Heart right ventricle (tissue), 16 donors: ENCODE measurements at regions of chr17 and their contacts with region 1.

Region 1: GRCh38 chr17:50626037-50626574 is 8.6 kb upstream of the ABCC3 start:
- DNase-seq: peak; percentile 76
- ATAC-seq: peak; percentile 73 to 88 (median 84)
- H3K4me3 ChIP-seq: no peak overlapping the region
- H3K27ac ChIP-seq: no peak overlapping the region
- H3K4me1 ChIP-seq: peaks cover 0 to 9% (median 7%) of the 10 kb centered on the region in 9 donors
- H3K27me3 ChIP-seq: peaks cover 0 to 53% (median 46%) of the 10 kb centered on the region in 7 donors
- CTCF ChIP-seq: peak; percentile 67 to 88 (median 83)

Region 2: GRCh38 chr17:50487213-50488096 is 138.7 kb before region 1 on chr17:
- intact Hi-C with region 1: loop called in 8 of 10 experiments (anchors 5 to 10 kb)
- DNase-seq: no peak
- ATAC-seq: no peak
- H3K4me3 ChIP-seq: no peak overlapping the region
- H3K27ac ChIP-seq: no peak overlapping the region
- H3K4me1 ChIP-seq: peaks cover 2 to 9% (median 7%) of the 10 kb centered on the region in 9 donors
- H3K27me3 ChIP-seq: no peaks in the 10 kb centered on the region
- CTCF ChIP-seq: no peak

Region 3: GRCh38 chr17:50672831-50673601 is 46.9 kb after region 1 on chr17:
- intact Hi-C with region 1: loop called in 1 of 10 experiments (anchors 5 kb)
- DNase-seq: peak in 1 of 2 donors; percentile 49
- ATAC-seq: peak; percentile 57 to 96 (median 86)
- H3K4me3 ChIP-seq: no peak overlapping the region
- H3K27ac ChIP-seq: peak overlapping the region in 2 of 10 donors; percentile 25 to 26
- H3K4me1 ChIP-seq: peaks cover 0 to 5% (median 0%) of the 10 kb centered on the region in 9 donors
- H3K27me3 ChIP-seq: no peaks in the 10 kb centered on the region
- CTCF ChIP-seq: no peak

Region 4: DNA sequence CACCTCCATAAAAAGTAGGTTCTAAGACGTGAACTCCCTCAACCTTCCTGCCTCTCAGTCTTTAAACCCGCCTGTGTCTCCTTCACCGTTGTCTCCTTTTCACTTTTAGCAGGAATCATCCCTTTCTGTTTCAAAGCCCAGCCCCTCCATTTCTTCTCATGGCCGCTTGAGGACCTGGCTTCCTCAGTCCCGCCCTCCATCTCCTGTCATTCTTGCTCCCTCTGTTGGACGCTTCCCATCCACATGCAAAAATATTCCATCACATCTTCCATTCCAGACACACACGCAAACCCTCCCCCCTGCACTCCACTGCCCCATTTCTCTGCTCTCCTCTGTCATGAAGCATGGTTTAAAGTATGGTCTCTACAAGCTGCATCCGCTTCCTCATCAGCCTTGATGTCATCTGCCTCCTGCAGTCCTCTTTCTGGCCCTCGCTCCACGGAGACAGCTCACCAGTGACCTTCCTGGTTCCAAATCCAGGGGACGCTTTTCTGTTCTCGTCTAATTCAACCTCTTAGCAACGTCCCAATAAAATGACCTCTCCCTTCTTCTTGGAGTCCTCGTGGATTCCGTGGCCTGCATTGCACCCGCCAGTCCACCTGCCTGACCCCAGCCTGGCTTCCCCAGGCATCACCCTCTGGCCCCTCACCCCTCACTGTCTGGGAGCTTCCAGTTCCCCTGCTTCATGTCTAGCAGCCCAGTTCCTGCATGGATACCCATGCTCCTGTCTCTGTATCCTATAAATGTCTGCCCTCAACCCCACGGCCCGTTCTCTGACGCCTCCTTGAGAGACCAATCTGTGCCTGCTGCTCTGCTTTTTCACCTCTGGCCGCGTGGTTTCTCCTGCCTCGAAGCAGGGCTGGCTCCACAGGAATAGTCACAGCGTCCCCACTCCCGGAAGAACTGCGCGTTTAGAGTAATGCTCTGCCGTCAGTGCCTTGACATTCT is 55.4 kb after region 1 on chr17:
- intact Hi-C with region 1: loop called in 8 of 10 experiments (anchors 1 to 5 kb)
- DNase-seq: peak in 1 of 2 donors; percentile 59
- ATAC-seq: peak in 6 of 8 donors; percentile 53 to 84 (median 76)
- H3K4me3 ChIP-seq: no peak overlapping the region
- H3K27ac ChIP-seq: peak overlapping the region in 1 of 10 donors; percentile 53
- H3K4me1 ChIP-seq: peaks cover 0 to 19% (median 8%) of the 10 kb centered on the region in 9 donors
- H3K27me3 ChIP-seq: no peaks in the 10 kb centered on the region
- CTCF ChIP-seq: peak; percentile 18 to 69 (median 58)

Region 5: GRCh38 chr17:50686494-50687199 is 60.5 kb after region 1 on chr17:
- intact Hi-C with region 1: loop called in 8 of 10 experiments (anchors 1 to 5 kb)
- DNase-seq: peak in 1 of 2 donors; percentile 34
- ATAC-seq: peak; percentile 21 to 91 (median 77)
- H3K4me3 ChIP-seq: no peak overlapping the region
- H3K27ac ChIP-seq: peak overlapping the region in 7 of 10 donors; percentile 39 to 65 (median 56)
- H3K4me1 ChIP-seq: peaks cover 2 to 36% (median 13%) of the 10 kb centered on the region in 9 donors
- H3K27me3 ChIP-seq: no peaks in the 10 kb centered on the region
- CTCF ChIP-seq: no peak

Region 6: GRCh38 chr17:51214920-51215319 is 588.8 kb after region 1 on chr17:
- intact Hi-C with region 1: no loop called
- DNase-seq: no peak
- ATAC-seq: no peak
- H3K4me3 ChIP-seq: no peak overlapping the region
- H3K27ac ChIP-seq: peak overlapping the region in 1 of 10 donors; percentile 35
- H3K4me1 ChIP-seq: peaks cover 0 to 6% (median 0%) of the 10 kb centered on the region in 9 donors
- H3K27me3 ChIP-seq: no peaks in the 10 kb centered on the region
- CTCF ChIP-seq: no peak